Transverse colon (tissue), 4 donors: ENCODE measurements at regions of chr17 and their contacts with region 1.

Region 1: GRCh38 chr17:9087921-9088320 is 66.6 kb downstream of the NTN1 start:
- DNase-seq: no peak
- H3K4me3 ChIP-seq: no peak overlapping the region
- H3K27ac ChIP-seq: no peak overlapping the region
- H3K4me1 ChIP-seq: peaks cover 0 to 3% (median 0%) of the 10 kb centered on the region in 4 donors
- H3K27me3 ChIP-seq: no peaks in the 10 kb centered on the region
- CTCF ChIP-seq: no peak
- EP300 ChIP-seq: no peak
- POLR2A ChIP-seq: no peak

Region 2: GRCh38 chr17:8606401-8606800 is 481.5 kb before region 1 on chr17:
- in situ Hi-C with region 1: no loop called
- intact Hi-C with region 1: loop called (anchors 5 kb)
- DNase-seq: no peak
- H3K4me3 ChIP-seq: no peak overlapping the region
- H3K27ac ChIP-seq: peak overlapping the region in 1 of 4 donors; percentile 30
- H3K4me1 ChIP-seq: peaks cover 0 to 16% (median 2%) of the 10 kb centered on the region in 4 donors
- H3K27me3 ChIP-seq: no peaks in the 10 kb centered on the region
- CTCF ChIP-seq: no peak
- EP300 ChIP-seq: no peak
- POLR2A ChIP-seq: no peak